Dendritic cell treated with granulocyte-macrophage colony-stimulating factor and Interleukin-4, amounts not matched to agents 40 ng/mL and 50 ng/mL, for 4 days (primary cell): ENCODE measurements at regions of chr1 and their contacts with region 1.

Region 1: GRCh38 chr1:21963477-21964217 is 13.2 kb upstream of the CELA3B start:
- H3K4me3 Mint-ChIP-seq: no peak overlapping the region
- H3K27ac Mint-ChIP-seq: no peak overlapping the region
- H3K4me1 Mint-ChIP-seq: peaks cover 12% of the 10 kb centered on the region
- H3K27me3 Mint-ChIP-seq: peaks cover 3% of the 10 kb centered on the region

Region 2: GRCh38 chr1:21703318-21703963 is 260.2 kb before region 1 on chr1:
- intact Hi-C with region 1: loop called (anchors 2 kb)
- H3K4me3 Mint-ChIP-seq: no peak overlapping the region
- H3K27ac Mint-ChIP-seq: no peak overlapping the region
- H3K4me1 Mint-ChIP-seq: peaks cover 12% of the 10 kb centered on the region
- H3K27me3 Mint-ChIP-seq: no peaks in the 10 kb centered on the region

Region 3: GRCh38 chr1:21869620-21870121 is 94.0 kb before region 1 on chr1:
- intact Hi-C with region 1: loop called (anchors 10 kb)
- H3K4me3 Mint-ChIP-seq: no peak overlapping the region
- H3K27ac Mint-ChIP-seq: no peak overlapping the region
- H3K4me1 Mint-ChIP-seq: peaks cover 14% of the 10 kb centered on the region
- H3K27me3 Mint-ChIP-seq: no peaks in the 10 kb centered on the region

Region 4: GRCh38 chr1:22077728-22078127 is 114.1 kb after region 1 on chr1:
- intact Hi-C with region 1: no loop called
- H3K4me3 Mint-ChIP-seq: no peak overlapping the region
- H3K27ac Mint-ChIP-seq: no peak overlapping the region
- H3K4me1 Mint-ChIP-seq: peaks cover 69% of the 10 kb centered on the region
- H3K27me3 Mint-ChIP-seq: no peaks in the 10 kb centered on the region

Region 5: GRCh38 chr1:22341791-22342605 is 378.4 kb after region 1 on chr1:
- intact Hi-C with region 1: no loop called
- H3K4me3 Mint-ChIP-seq: no peak overlapping the region
- H3K27ac Mint-ChIP-seq: no peak overlapping the region
- H3K4me1 Mint-ChIP-seq: no peaks in the 10 kb centered on the region
- H3K27me3 Mint-ChIP-seq: peaks cover 44% of the 10 kb centered on the region